ENCODE measurements at regions of chr1 and their contacts with region 1.

Region 1: DNA sequence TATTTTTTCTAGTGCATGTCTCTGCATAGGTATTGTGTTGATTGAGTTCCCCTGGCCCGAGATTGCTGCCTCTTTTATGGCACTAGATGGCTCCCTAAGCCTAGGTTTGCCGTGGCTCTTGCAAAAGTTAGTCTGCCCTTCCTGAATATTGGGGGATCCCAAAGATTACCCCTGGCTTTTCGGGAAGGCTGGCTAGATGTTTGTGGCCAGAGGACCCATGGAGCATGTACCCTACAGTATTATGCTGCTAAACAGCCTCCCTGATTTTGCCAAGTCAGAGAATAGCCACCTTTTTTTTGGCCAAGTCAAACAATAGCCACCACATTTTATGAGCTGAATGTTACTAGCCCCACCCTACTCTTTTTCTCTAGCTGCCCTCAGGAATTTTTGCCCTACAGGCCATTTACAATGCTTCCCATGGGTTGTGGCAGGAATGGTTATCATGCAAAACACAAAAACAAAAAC is 343.2 kb downstream of the OLFM3 start:
- DNase-seq: peak; percentile 56
- H3K4me3 Mint-ChIP-seq: no peak overlapping the region
- H3K27ac Mint-ChIP-seq: no peak overlapping the region
- H3K4me1 Mint-ChIP-seq: no peaks in the 10 kb centered on the region
- H3K27me3 Mint-ChIP-seq: peaks cover 74% of the 10 kb centered on the region
- CTCF ChIP-seq: peak; percentile 67

Region 2: DNA sequence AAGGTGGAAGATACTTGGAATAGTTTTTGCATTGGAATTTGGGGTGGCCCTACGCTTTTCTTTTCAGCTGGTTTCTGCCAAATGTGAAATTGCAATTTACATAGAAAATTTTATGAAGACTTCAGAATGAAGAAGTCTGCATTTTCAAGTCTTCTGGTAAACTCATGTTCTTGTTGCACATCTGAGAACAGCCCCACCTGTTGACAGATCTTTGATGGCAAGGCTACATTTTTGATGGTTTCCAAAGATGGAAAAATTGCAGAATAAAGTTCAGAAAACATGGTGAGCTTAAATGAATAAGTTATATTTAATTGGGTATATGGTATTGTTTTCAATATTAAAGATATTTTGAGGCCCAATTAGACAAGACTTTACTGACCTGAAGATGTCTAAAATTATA is 317.8 kb after region 1 on chr1:
- CTCF ChIA-PET with region 1: interaction called, 5 read pairs
- POLR2A ChIA-PET with region 1: no interaction called
- intact Hi-C with region 1: loop called (anchors 1 kb)
- DNase-seq: peak; percentile 16
- H3K4me3 Mint-ChIP-seq: no peak overlapping the region
- H3K27ac Mint-ChIP-seq: no peak overlapping the region
- H3K4me1 Mint-ChIP-seq: no peaks in the 10 kb centered on the region
- H3K27me3 Mint-ChIP-seq: peaks cover 87% of the 10 kb centered on the region
- CTCF ChIP-seq: peak; percentile 20

Region 3: GRCh38 chr1:102191723-102192122 is 538.2 kb after region 1 on chr1:
- CTCF ChIA-PET with region 1: interaction called, 4 read pairs
- POLR2A ChIA-PET with region 1: no interaction called
- intact Hi-C with region 1: loop called (anchors 1 kb)
- DNase-seq: peak; percentile 74
- H3K4me3 Mint-ChIP-seq: no peak overlapping the region
- H3K27ac Mint-ChIP-seq: no peak overlapping the region
- H3K4me1 Mint-ChIP-seq: no peaks in the 10 kb centered on the region
- H3K27me3 Mint-ChIP-seq: peaks cover 64% of the 10 kb centered on the region
- CTCF ChIP-seq: peak; percentile 35

Region 4: DNA sequence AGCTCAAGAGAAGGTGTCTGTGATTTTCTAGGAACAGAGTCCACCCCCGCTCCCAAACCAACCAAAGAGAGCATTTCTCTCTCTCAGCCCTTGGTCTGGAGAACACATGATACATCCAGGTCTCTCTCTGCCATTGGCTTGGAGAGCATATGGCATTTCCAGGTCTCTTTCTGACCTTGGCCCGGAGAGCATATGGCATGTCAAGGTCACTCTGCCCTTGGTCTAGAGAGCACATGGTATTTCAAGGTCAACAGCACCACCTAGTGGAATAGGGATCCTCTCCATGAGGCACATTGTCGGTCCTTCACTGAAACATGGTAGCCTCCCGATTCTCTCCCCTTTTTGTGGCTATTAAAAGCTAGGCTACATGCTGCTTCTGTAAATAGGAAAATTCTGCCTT is 780.9 kb after region 1 on chr1:
- CTCF ChIA-PET with region 1: interaction called, 4 read pairs
- POLR2A ChIA-PET with region 1: interaction called, 4 read pairs
- intact Hi-C with region 1: loop called (anchors 2 kb)
- DNase-seq: peak; percentile 40
- H3K4me3 Mint-ChIP-seq: no peak overlapping the region
- H3K27ac Mint-ChIP-seq: no peak overlapping the region
- H3K4me1 Mint-ChIP-seq: no peaks in the 10 kb centered on the region
- H3K27me3 Mint-ChIP-seq: no peaks in the 10 kb centered on the region
- CTCF ChIP-seq: peak; percentile 66

Region 5: GRCh38 chr1:102790997-102791396 is 1137.5 kb after region 1 on chr1:
- CTCF ChIA-PET with region 1: no interaction called
- POLR2A ChIA-PET with region 1: no interaction called
- intact Hi-C with region 1: loop called (anchors 2 kb)
- DNase-seq: peak; percentile 30
- H3K4me3 Mint-ChIP-seq: no peak overlapping the region
- H3K27ac Mint-ChIP-seq: no peak overlapping the region
- H3K4me1 Mint-ChIP-seq: no peaks in the 10 kb centered on the region
- H3K27me3 Mint-ChIP-seq: no peaks in the 10 kb centered on the region
- CTCF ChIP-seq: peak; percentile 6